Spleen (tissue), 13 donors: ENCODE measurements at regions of chr1 and their contacts with region 1.

Region 1: DNA sequence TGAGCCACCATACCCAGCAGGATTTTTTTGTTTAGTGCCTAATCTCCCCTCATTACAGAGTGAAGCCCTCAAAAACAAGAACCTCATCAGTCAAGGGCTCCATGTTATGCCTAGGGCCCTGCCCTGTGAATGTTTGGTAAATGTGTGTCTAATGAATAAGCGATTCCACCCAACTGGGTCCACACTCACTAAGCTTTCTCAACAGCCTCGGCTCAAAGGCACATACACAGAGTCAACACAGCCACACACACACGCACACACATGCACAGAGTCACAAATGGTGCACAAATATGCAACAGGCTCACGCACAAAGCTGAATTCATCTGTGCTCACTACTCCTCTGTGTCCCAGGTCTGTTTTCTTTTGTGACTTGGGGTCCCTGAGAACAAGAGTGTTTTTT is 11.7 kb upstream of the SYNC start:
- DNase-seq: no peak
- H3K4me3 ChIP-seq: no peak overlapping the region
- H3K27ac ChIP-seq: no peak overlapping the region
- H3K4me1 ChIP-seq: peaks cover 0 to 26% (median 10%) of the 10 kb centered on the region in 6 donors
- H3K27me3 ChIP-seq: peaks cover 0 to 3% (median 0%) of the 10 kb centered on the region in 7 donors
- CTCF ChIP-seq: no peak
- POLR2A ChIP-seq: no peak

Region 2: GRCh38 chr1:32773018-32773763 is 58.9 kb after region 1 on chr1:
- intact Hi-C with region 1: loop called (anchors 5 kb)
- DNase-seq: peak; percentile 91
- H3K4me3 ChIP-seq: no peak overlapping the region
- H3K27ac ChIP-seq: peak overlapping the region in 2 of 8 donors; percentile 2 to 20
- H3K4me1 ChIP-seq: peaks cover 0 to 18% (median 3%) of the 10 kb centered on the region in 6 donors
- H3K27me3 ChIP-seq: no peaks in the 10 kb centered on the region
- CTCF ChIP-seq: peak; percentile 57 to 93 (median 87)
- POLR2A ChIP-seq: no peak

Region 3: GRCh38 chr1:32870615-32871363 is 156.5 kb after region 1 on chr1 and contains the start of gene FNDC5:
- intact Hi-C with region 1: loop called (anchors 5 kb)
- DNase-seq: no peak
- H3K4me3 ChIP-seq: peak within 1 kb of the TSS in 7 of 8 donors; percentile 15 to 65 (median 28)
- H3K27ac ChIP-seq: no peak within 1 kb of the TSS
- H3K4me1 ChIP-seq: peaks cover 3 to 30% (median 24%) of the 10 kb centered on the region in 6 donors
- H3K27me3 ChIP-seq: peaks cover 0 to 66% (median 26%) of the 10 kb centered on the region in 7 donors
- CTCF ChIP-seq: no peak
- POLR2A ChIP-seq: no peak
- total RNA-seq, gene FNDC5: not detected

Region 4: GRCh38 chr1:32933742-32934322 is 219.6 kb after region 1 on chr1:
- intact Hi-C with region 1: no loop called
- DNase-seq: no peak
- H3K4me3 ChIP-seq: no peak overlapping the region
- H3K27ac ChIP-seq: peak overlapping the region in 5 of 8 donors; percentile 38 to 61 (median 49)
- H3K4me1 ChIP-seq: peaks cover 0 to 16% (median 12%) of the 10 kb centered on the region in 6 donors
- H3K27me3 ChIP-seq: no peaks in the 10 kb centered on the region
- CTCF ChIP-seq: peak in 2 of 11 experiments; percentile 10 to 22
- POLR2A ChIP-seq: no peak